BJ (cell line): ENCODE measurements at regions of chr4 and their contacts with region 1.

Region 1: DNA sequence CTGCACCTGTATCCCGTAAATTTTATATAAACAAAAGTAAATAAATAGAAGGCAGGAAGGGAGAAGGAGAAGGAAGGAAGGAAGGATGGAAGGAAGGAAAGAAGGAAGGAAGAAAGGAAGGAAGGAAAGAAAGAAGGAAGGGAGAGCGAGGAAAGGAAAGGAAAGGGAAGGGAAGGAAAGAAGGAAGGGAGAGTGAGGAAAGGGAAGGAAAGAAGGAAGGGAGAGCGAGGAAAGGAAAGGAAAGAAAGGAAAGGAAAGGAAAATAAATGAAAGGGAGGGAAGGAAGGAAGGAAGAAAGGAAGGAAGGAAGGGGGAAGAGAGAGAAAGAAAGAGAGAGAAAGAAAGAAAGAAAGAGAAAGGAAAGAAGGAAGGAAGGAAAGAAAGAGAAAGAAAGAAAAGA is 43.0 kb upstream of the FRG1 start:
- DNase-seq: no peak
- H3K4me3 ChIP-seq: no peak overlapping the region
- H3K27me3 ChIP-seq: no peaks in the 10 kb centered on the region
- CTCF ChIP-seq: no peak

Region 2: GRCh38 chr4:189740873-189741272 is 156.8 kb before region 1 on chr4:
- CTCF ChIA-PET with region 1: no interaction called
- POLR2A ChIA-PET with region 1: no interaction called
- DNase-seq: no peak
- H3K4me3 ChIP-seq: no peak overlapping the region
- H3K27me3 ChIP-seq: no peaks in the 10 kb centered on the region
- CTCF ChIP-seq: no peak

Region 3: GRCh38 chr4:189912170-189912569 is 14.5 kb after region 1 on chr4:
- CTCF ChIA-PET with region 1: interaction called, 10 read pairs
- POLR2A ChIA-PET with region 1: no interaction called
- DNase-seq: no peak
- H3K4me3 ChIP-seq: no peak overlapping the region
- H3K27me3 ChIP-seq: no peaks in the 10 kb centered on the region
- CTCF ChIP-seq: peak; percentile 58